RWPE1 (cell line): ENCODE measurements at regions of chr1 and their contacts with region 1.

Region 1: GRCh38 chr1:55506686-55507577 is 291.8 kb upstream of the USP24 start:
- DNase-seq: peak; percentile 36
- H3K27ac ChIP-seq: no peak overlapping the region
- CTCF ChIP-seq: no peak

Region 2: DNA sequence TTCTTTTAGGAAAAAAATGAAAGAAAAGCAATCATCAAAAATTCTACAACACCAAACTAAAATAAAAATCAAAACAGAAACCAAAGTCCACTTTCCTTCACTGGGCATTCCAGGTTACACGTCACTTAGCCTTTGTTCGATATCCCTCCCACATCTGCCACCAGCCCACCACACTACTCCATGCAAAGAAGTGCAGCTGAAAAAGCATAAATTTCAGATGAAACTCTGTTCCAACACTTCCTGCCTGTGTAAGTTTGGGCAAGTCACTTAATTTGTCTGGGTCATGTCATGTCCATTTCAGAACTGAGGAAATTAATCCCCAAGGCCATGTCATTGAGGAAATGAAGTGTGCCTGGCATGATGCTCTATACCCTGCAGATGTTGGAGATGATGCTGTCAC is 62.5 kb after region 1 on chr1:
- CTCF ChIA-PET with region 1: no interaction called
- POLR2A ChIA-PET with region 1: no interaction called
- DNase-seq: no peak
- H3K27ac ChIP-seq: no peak overlapping the region
- CTCF ChIP-seq: no peak

Region 3: DNA sequence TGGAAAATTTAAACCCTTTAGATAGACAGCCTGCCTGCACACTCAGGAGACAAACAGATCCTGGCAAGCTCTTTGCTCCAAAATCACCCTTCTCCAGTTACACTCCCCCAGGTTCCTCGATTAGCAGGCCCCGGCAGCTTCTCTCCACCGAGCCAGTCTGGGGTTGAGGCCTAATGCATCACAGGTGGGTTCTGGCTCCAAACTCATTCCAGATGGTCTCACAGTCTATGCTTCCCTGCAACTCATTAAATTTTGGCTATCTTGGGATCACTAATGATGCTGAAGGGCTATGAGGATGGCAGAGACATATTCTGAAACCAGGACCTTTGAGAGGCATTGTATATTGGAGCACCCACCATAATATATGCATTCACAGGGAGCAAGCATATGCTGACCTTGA is 268.1 kb after region 1 on chr1:
- CTCF ChIA-PET with region 1: interaction called, 11 read pairs
- POLR2A ChIA-PET with region 1: no interaction called
- DNase-seq: no peak
- H3K27ac ChIP-seq: no peak overlapping the region
- CTCF ChIP-seq: no peak